ENCODE measurements at regions of chr9 and their contacts with region 1.

Region 1: DNA sequence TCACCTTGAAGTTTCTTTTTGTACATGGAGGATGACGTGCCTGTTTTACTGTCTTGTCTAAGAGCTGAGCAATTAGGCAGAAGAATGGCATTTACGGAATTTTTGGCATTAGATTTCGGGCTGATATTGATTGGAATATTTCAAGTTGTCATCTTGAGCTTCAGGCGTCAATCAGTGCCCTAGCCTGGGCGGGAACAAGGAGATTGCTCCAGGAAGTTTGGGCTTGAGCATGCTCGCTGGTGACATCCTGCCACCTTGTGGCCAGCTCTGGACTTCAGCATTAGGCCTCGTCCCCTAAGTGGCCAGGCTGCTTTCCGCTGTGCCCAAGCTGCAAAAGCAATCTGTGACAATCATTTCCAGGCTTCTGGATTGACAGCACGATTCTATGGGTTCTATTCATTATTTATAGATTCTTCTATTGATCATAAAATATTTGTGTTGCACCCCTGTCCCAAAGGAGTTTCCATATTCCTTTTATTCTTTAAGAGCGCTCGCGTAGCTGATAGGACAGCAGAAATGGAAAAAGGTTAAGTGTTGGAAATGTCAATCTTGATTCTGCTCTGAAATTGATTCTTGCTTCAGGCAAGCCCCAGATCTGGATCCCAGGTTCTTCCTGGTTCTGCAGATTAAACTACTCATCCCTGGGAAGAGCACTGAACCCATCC is 79.3 kb downstream of the SLC28A3 start:
- DNase-seq: peak; percentile 14
- H3K4me3 ChIP-seq: 0 out of 2 replicates have a peak overlapping the region, but pooled peaks have one; percentile 10
- H3K27me3 ChIP-seq: no peaks in the 10 kb centered on the region; the same call in 1 of the 2 replicates
- CTCF ChIP-seq: peak; percentile 92

Region 2: DNA sequence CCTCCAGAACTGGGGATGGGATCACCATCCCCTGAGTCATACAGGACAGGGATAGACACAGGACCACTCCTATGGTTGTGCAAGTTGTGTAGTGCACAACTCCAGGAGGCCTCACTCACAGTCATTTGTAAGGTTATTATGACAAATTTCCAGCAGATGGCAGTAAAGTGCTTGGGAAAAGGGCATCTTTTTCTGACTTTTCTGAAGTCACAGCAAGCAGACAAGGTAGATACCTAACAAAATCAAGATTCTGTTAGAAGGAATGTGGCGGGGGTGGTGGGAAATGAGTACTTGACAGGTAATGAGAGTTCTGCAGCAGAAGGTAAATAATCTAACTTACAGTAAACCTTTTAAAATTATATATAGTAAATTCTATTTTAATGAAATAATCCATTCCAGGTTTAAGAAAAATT is 323.3 kb before region 1 on chr9:
- CTCF ChIA-PET with region 1: interaction called, 45 read pairs
- POLR2A ChIA-PET with region 1: no interaction called
- DNase-seq: no peak
- H3K4me3 ChIP-seq: no peak overlapping the region
- H3K27me3 ChIP-seq: no peaks in the 10 kb centered on the region
- CTCF ChIP-seq: peak; percentile 59; the same call in 1 of the 2 replicates

Region 3: DNA sequence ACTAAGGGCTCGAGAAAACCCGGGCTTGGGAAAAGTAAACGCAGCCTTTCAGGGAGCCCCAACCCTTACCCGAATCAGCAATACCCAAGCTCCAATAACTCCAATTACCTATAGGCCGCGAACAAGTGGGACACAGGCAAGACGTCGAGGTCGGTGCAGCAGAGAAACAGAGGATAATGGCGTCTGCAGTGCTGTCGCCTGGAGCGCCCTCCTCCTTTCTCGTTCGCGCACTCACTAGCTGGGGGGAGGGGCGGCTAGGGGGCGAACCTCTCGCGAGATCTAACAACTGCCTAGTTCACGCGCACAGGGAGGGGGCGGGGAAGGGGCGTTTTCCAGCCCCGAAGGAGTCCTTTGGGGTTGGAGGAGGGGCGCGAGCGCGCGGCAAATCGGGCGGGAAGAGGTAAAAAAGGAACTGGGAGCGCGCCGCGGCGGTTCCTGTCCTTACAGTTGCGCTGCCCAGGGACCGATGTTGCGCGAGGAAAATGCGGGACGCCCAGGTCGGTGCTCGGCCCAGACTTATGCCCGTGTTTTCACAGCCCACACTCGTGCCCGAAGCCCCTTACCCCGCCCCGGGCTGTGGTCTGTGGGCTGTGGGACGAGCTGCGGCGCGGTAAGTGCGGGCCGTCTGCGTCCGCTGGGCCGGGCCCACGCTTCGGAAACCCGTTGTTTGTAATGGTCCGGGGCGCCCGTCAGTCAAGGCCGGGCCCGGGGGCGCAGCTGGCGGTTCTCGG is 280.7 kb before region 1 on chr9 and contains the start of gene RMI1:
- CTCF ChIA-PET with region 1: interaction called, 13 read pairs
- POLR2A ChIA-PET with region 1: no interaction called
- DNase-seq: peak; percentile 76
- H3K4me3 ChIP-seq: peak within 1 kb of the TSS; percentile 100
- H3K27me3 ChIP-seq: no peaks in the 10 kb centered on the region
- CTCF ChIP-seq: 0 out of 2 replicates have a peak, but pooled peaks have one; percentile 25
- polyA plus RNA-seq, gene RMI1: 0.76 and 2.6 TPM in 2 replicates

Region 4: DNA sequence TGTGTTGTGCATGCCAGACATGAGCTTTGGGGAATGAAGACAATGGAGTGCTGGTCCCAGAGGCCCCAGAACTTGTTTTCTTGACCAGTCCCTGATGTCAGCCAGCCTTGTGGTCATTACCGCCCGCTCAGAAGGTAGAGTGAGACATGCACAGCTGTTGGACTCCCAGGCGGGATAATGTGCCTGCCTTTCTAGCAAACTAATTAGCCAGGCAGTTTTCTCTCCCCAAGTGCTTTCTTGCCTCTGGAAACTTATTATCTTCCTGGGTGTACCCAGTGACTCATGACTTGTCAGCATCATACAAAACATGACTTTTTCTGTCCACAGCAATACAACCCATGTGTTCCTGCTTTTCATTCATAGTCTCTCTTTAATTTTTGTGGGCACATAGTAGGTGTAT is 149.5 kb before region 1 on chr9:
- CTCF ChIA-PET with region 1: no interaction called
- POLR2A ChIA-PET with region 1: no interaction called
- DNase-seq: no peak
- H3K4me3 ChIP-seq: no peak overlapping the region
- H3K27me3 ChIP-seq: no peaks in the 10 kb centered on the region
- CTCF ChIP-seq: no peak

Region 5: GRCh38 chr9:84174486-84174885 is 86.7 kb before region 1 on chr9:
- CTCF ChIA-PET with region 1: interaction called, 20 read pairs
- POLR2A ChIA-PET with region 1: no interaction called
- DNase-seq: no peak
- H3K4me3 ChIP-seq: no peak overlapping the region
- H3K27me3 ChIP-seq: no peaks in the 10 kb centered on the region
- CTCF ChIP-seq: no peak

Region 6: GRCh38 chr9:84271531-84271900 is 10.3 kb after region 1 on chr9:
- CTCF ChIA-PET with region 1: interaction called, 13 read pairs
- POLR2A ChIA-PET with region 1: no interaction called
- DNase-seq: no peak
- H3K4me3 ChIP-seq: peak overlapping the region; percentile 42
- H3K27me3 ChIP-seq: no peaks in the 10 kb centered on the region
- CTCF ChIP-seq: no peak

Region 7: GRCh38 chr9:84315278-84315877 is 54.2 kb after region 1 on chr9:
- CTCF ChIA-PET with region 1: interaction called, 13 read pairs
- POLR2A ChIA-PET with region 1: no interaction called
- DNase-seq: no peak
- H3K4me3 ChIP-seq: no peak overlapping the region
- H3K27me3 ChIP-seq: no peaks in the 10 kb centered on the region
- CTCF ChIP-seq: peak; percentile 82

Region 8: DNA sequence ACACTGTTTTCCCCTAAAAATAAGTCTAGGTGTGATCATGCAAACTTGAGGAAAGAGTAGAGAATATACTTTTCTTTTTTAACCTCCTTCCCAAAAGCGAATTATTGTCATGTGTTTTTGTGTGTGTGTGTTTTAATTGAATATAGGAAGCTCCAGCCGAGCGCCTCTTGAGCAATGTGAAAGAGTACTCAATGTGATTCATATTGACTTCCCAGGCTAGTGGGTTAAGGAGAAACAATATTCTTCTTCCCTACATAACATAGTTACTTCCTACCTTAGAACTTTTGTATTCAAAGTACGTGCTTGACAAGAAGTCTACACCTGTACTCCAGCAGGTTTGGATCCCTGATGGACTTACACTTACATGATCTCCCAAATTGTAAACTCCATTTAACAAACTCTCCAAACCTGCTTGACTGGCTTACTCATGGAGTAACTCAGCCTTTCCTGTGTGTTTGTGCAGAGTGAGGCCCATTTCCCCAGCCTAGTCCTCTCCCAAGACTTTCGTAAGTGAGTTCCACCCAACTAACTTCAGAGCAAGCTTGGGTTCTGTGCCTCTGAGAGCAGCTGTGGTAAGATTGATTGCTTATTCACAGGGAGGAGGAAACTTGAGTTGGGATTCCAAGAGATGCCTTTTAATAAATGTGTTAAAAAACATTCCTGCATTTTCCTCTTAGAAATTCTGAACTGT is 70.0 kb after region 1 on chr9:
- CTCF ChIA-PET with region 1: no interaction called
- POLR2A ChIA-PET with region 1: no interaction called
- DNase-seq: no peak
- H3K4me3 ChIP-seq: no peak overlapping the region
- H3K27me3 ChIP-seq: no peaks in the 10 kb centered on the region
- CTCF ChIP-seq: no peak

Region 9: DNA sequence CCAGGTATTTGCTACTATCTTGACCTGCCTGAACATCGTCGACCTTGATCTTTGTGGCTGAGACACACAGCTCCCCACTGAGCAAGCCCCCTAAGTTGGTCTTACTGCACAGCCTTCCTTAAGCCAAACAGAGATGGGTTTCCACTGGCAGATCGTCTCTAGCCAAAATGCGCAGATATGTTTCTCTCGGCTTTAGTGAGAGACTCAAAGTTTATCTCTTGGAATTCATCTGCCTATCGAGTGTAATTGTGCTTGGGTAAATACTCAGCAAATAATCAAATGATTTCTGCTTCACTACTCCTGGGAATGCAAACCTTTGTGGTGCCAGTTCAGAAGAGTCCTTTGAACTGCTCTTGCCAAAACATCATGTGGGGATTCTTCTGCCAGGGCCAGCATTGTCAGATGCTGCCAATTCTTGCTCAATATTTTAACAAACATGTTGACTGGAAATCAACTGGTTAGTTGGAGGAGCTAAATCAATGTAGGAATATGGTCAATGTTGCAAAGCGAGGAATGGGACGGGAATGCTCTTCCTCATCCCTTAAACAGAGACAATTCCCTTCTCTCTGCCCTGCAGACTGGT is 220.5 kb after region 1 on chr9:
- CTCF ChIA-PET with region 1: no interaction called
- POLR2A ChIA-PET with region 1: no interaction called
- DNase-seq: no peak
- H3K4me3 ChIP-seq: no peak overlapping the region
- H3K27me3 ChIP-seq: no peaks in the 10 kb centered on the region
- CTCF ChIP-seq: no peak

Measured in BJ (cell line).